MCF 10A (cell line): ENCODE measurements at regions of chr19 and their contacts with region 1.

Region 1: GRCh38 chr19:45137179-45137761 is 23.5 kb downstream of the NKPD1 start:
- DNase-seq: no peak
- H3K4me3 Mint-ChIP-seq: no peak overlapping the region
- H3K27ac Mint-ChIP-seq: no peak overlapping the region
- H3K4me1 Mint-ChIP-seq: peaks cover 6% of the 10 kb centered on the region
- H3K27me3 Mint-ChIP-seq: no peaks in the 10 kb centered on the region
- CTCF ChIP-seq: no peak

Region 2: DNA sequence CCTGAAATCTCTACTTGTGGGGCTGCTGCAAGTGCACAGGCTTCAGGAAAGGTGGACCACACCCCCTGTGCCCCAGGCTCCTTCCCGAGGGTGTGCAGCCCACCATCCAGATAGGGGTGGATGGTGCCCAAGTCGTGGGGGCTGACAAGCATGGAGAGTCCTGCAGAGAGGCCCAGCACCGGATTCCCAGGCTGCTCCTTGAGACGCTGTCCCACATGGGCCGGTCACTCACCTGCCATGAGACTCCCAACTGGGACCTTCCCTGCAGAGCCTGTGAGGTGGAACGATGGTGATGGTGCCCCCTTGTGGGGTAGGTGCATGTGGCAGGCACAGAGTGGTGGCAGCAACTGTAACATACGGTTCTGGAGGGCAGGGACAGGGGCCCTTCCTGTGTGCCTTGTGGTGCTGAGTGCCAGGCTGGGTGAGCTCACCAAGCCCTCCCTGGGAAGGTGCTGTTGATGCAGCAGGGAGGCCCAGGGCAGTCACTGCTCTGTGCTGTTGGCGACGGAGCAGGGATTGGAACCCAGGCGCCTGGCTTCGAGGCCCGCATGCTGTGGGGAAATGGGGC is 11.3 kb before region 1 on chr19:
- CTCF ChIA-PET with region 1: interaction called, 19 read pairs
- POLR2A ChIA-PET with region 1: interaction called, 3 read pairs
- intact Hi-C with region 1: no loop called
- DNase-seq: peak; percentile 73
- H3K4me3 Mint-ChIP-seq: no peak overlapping the region
- H3K27ac Mint-ChIP-seq: no peak overlapping the region
- H3K4me1 Mint-ChIP-seq: peaks cover 6% of the 10 kb centered on the region
- H3K27me3 Mint-ChIP-seq: no peaks in the 10 kb centered on the region
- CTCF ChIP-seq: peak; percentile 65